ENCODE measurements at regions of chr9 and their contacts with region 1.

Region 1: GRCh38 chr9:70534061-70534460 is 119.6 kb upstream of the KLF9 start:
- DNase-seq: peak; percentile 80
- H3K4me3 ChIP-seq: no peak overlapping the region
- H3K27ac ChIP-seq: peak overlapping the region; percentile 84
- H3K4me1 ChIP-seq: peaks cover 32% of the 10 kb centered on the region
- H3K27me3 ChIP-seq: no peaks in the 10 kb centered on the region
- CTCF ChIP-seq: no peak
- POLR2A ChIP-seq: no peak

Region 2: DNA sequence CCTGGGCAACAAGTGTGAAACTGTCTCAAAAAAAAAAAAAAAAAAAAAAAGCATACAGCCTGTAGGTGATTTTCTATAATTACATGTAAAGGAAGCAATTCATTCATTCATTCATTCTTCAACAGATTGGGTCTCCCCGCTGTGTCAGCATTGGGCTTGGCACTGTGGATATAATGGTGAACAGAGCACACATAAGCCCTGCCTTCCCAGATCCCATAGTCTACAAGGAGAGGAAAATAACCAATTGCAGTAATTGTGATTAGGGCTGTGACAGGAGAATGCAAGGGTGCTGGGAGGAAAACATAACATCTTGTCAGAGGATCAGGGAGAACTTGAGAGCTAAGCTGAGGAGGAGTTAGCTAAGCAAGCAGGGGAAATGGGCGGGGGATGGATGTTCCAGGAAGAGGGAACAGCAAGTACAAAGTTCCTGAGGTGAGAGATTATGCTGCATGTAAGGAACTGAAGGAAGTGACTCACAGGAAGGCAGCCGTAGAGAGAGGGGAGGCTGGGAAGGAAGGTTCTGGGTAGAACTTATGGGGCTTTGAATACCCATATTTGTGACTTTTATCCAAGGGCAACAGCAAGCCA is 95.6 kb before region 1 on chr9:
- CTCF ChIA-PET with region 1: no interaction called
- POLR2A ChIA-PET with region 1: no interaction called
- dilution Hi-C with region 1: no loop called
- intact Hi-C with region 1: loop called (anchors 1 kb)
- DNase-seq: peak; percentile 93
- H3K4me3 ChIP-seq: no peak overlapping the region
- H3K27ac ChIP-seq: peak overlapping the region; percentile 71
- H3K4me1 ChIP-seq: peaks cover 48% of the 10 kb centered on the region
- H3K27me3 ChIP-seq: no peaks in the 10 kb centered on the region
- CTCF ChIP-seq: no peak
- POLR2A ChIP-seq: peak; percentile 61

Region 3: GRCh38 chr9:70553707-70554673 is 19.9 kb after region 1 on chr9:
- CTCF ChIA-PET with region 1: interaction called, 4 read pairs
- POLR2A ChIA-PET with region 1: no interaction called
- dilution Hi-C with region 1: no loop called
- intact Hi-C with region 1: loop called (anchors 1 kb)
- DNase-seq: peak; percentile 69
- H3K4me3 ChIP-seq: peak overlapping the region in 1 of 3 experiments; percentile 16
- H3K27ac ChIP-seq: peak overlapping the region; percentile 89
- H3K4me1 ChIP-seq: peaks cover 24% of the 10 kb centered on the region
- H3K27me3 ChIP-seq: no peaks in the 10 kb centered on the region
- CTCF ChIP-seq: no peak
- POLR2A ChIP-seq: peak; percentile 45

Region 4: GRCh38 chr9:70587201-70587600 is 53.1 kb after region 1 on chr9:
- CTCF ChIA-PET with region 1: no interaction called
- POLR2A ChIA-PET with region 1: no interaction called
- dilution Hi-C with region 1: no loop called
- intact Hi-C with region 1: loop called (anchors 1 kb)
- DNase-seq: peak; percentile 83
- H3K4me3 ChIP-seq: no peak overlapping the region
- H3K27ac ChIP-seq: peak overlapping the region; percentile 68
- H3K4me1 ChIP-seq: peaks cover 34% of the 10 kb centered on the region
- H3K27me3 ChIP-seq: no peaks in the 10 kb centered on the region
- CTCF ChIP-seq: no peak
- POLR2A ChIP-seq: no peak

Region 5: GRCh38 chr9:71582347-71582746 is 1048.3 kb after region 1 on chr9:
- CTCF ChIA-PET with region 1: no interaction called
- POLR2A ChIA-PET with region 1: no interaction called
- dilution Hi-C with region 1: no loop called
- intact Hi-C with region 1: no loop called
- DNase-seq: no peak
- H3K4me3 ChIP-seq: no peak overlapping the region
- H3K27ac ChIP-seq: no peak overlapping the region
- H3K4me1 ChIP-seq: no peaks in the 10 kb centered on the region
- H3K27me3 ChIP-seq: no peaks in the 10 kb centered on the region
- CTCF ChIP-seq: no peak
- POLR2A ChIP-seq: no peak